CD14-positive monocyte (primary cell): ENCODE measurements at regions of chr11 and their contacts with region 1.

Region 1: GRCh38 chr11:45038923-45039322 is 88.2 kb upstream of the TP53I11 start:
- DNase-seq: no peak
- H3K4me3 ChIP-seq: no peak overlapping the region
- H3K4me3 Mint-ChIP-seq: no peak overlapping the region
- H3K27ac ChIP-seq: no peak overlapping the region
- H3K27ac Mint-ChIP-seq: no peak overlapping the region
- H3K4me1 ChIP-seq: peaks cover 17 to 20% of the 10 kb centered on the region in 2 donors
- H3K4me1 Mint-ChIP-seq: peaks cover 17% of the 10 kb centered on the region
- H3K27me3 ChIP-seq: no peaks in the 10 kb centered on the region
- H3K27me3 Mint-ChIP-seq: peaks cover 4 to 8% (median 5%) of the 10 kb centered on the region in 3 donors
- CTCF ChIP-seq: no peak

Region 2: DNA sequence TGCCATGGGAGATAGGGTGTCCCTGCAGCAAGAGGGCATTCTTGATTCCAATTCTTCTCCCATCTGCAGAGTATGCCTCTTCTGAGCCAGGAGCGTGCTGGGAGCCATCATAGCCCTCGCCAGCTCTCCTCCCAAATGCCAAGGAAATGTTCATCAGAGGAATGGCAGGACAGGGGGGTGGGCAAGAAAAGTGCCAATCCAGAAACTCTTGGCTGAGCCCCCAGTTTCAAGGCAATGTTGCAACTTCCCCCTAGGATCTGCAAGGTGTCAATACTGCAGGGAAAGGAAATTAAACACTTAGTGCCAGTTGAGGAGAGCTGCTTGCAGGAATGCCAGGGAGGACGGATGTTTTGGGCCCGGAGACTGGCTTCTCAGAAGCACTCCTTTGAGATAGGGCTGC is 12.7 kb after region 1 on chr11:
- intact Hi-C with region 1: loop called in 1 of 2 experiments (anchors 1 kb)
- DNase-seq: no peak
- H3K4me3 ChIP-seq: no peak overlapping the region
- H3K4me3 Mint-ChIP-seq: no peak overlapping the region
- H3K27ac ChIP-seq: no peak overlapping the region
- H3K27ac Mint-ChIP-seq: peak overlapping the region in 1 of 7 donors; percentile 37
- H3K4me1 ChIP-seq: peaks cover 23 to 32% of the 10 kb centered on the region in 2 donors
- H3K4me1 Mint-ChIP-seq: peaks cover 37% of the 10 kb centered on the region
- H3K27me3 ChIP-seq: no peaks in the 10 kb centered on the region
- H3K27me3 Mint-ChIP-seq: peaks cover 2 to 7% (median 2%) of the 10 kb centered on the region in 3 donors
- CTCF ChIP-seq: no peak